Aorta (tissue), 5 donors: ENCODE measurements at regions of chr5 and their contacts with region 1.

Region 1: GRCh38 chr5:82165740-82166530 is 112.2 kb downstream of the RPS23 start:
- DNase-seq: peak; percentile 74 to 77
- ATAC-seq: peak; percentile 97
- H3K4me3 ChIP-seq: no peak overlapping the region
- H3K27ac ChIP-seq: no peak overlapping the region
- H3K4me1 ChIP-seq: no peaks in the 10 kb centered on the region
- H3K27me3 ChIP-seq: no peaks in the 10 kb centered on the region

Region 2: DNA sequence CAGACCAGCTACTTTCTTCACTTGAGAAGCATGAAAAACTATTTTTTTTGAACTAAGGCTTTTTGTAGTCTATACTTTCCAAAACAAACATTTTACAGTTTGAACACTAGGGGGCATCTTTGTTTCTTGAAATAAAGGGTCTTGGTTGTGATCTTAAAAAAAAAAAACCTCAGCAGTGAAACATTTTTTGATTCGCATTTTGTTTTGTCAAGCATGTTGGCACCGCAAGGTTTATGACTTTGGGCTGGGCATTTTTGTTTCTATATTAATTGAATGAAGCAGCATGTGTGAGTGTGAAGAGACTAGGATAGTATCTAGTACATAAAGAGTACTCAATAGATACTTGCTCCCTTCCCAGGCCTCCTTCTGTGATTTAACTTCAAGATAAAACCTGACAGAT is 740.4 kb before region 1 on chr5:
- intact Hi-C with region 1: loop called (anchors 5 kb)
- DNase-seq: no peak
- ATAC-seq: peak; percentile 69
- H3K4me3 ChIP-seq: no peak overlapping the region
- H3K27ac ChIP-seq: no peak overlapping the region
- H3K4me1 ChIP-seq: peaks cover 0 to 2% of the 10 kb centered on the region in 2 donors
- H3K27me3 ChIP-seq: no peaks in the 10 kb centered on the region

Region 3: DNA sequence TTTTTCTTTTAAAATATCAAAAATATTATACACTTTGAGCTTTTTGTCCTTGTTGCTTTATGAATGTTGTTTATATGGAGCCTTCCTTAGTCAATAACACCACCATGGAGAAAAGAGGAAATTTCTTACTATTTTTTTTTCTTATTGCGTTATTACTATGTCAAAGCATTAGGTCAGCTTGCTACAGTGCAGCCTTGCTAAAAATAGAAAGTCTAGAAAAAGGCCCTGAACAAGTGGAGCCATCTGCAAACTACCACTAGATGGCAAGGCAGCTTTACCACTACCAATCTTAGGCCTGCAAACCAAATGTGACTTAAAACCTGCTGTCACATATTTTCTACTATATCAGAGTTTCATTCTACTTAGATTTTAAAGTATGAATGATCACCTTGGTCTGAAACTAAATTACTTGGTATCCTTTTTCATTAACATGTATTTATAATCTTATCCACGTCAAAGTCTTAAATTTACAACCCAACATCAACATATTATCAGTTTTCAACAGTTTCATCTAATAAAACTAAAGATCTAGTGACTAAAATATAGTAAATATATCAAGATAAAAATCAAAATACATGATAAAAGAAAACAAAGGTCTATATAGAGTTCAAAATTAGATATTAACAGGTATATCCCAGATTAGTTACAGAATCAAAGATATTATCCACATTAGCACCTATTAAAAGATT is 658.9 kb before region 1 on chr5:
- intact Hi-C with region 1: loop called (anchors 5 kb)
- DNase-seq: peak in 1 of 2 donors; percentile 54
- ATAC-seq: peak; percentile 98
- H3K4me3 ChIP-seq: no peak overlapping the region
- H3K27ac ChIP-seq: no peak overlapping the region
- H3K4me1 ChIP-seq: no peaks in the 10 kb centered on the region
- H3K27me3 ChIP-seq: no peaks in the 10 kb centered on the region

Region 4: DNA sequence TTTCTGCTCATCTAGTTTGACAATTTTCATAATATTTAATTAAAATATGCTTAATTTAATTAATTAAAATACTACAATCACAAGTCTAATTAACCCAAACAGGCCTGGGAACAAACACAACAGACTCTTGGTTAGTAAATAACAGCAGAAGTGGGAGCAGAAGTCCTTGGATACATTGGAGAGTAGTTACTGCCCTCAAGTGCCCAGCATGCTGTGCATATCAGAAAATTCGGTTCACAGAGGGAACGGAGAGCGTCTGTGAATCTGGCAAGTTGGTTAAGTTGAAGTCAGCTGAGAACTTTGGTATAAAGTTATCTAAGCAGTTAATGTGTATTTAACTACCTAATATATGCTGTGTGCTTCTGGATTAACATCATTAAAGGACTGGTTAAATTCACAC is 281.1 kb before region 1 on chr5:
- intact Hi-C with region 1: no loop called
- DNase-seq: no peak
- ATAC-seq: no peak
- H3K4me3 ChIP-seq: no peak overlapping the region
- H3K27ac ChIP-seq: no peak overlapping the region
- H3K4me1 ChIP-seq: no peaks in the 10 kb centered on the region
- H3K27me3 ChIP-seq: no peaks in the 10 kb centered on the region

Region 5: DNA sequence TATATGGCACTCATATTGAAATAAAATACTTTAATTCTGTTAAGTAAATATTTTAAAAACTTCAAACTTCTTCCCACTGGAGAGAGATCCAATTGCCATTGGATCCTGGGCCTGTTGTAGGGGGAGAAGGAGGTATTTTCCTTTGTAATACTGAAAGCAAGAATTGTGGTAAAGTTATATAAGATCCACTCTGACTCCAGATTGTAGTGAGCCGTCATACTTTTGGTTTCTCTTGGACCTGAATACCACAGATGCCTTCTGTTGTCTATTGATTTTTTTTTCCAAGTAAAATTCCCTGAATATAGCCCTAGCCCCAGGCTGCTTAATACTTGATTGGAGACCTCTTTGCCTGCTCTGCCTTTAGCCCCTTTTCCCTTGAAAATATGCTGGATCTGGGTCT is 107.2 kb before region 1 on chr5:
- intact Hi-C with region 1: no loop called
- DNase-seq: no peak
- ATAC-seq: no peak
- H3K4me3 ChIP-seq: no peak overlapping the region
- H3K27ac ChIP-seq: no peak overlapping the region
- H3K4me1 ChIP-seq: no peaks in the 10 kb centered on the region
- H3K27me3 ChIP-seq: no peaks in the 10 kb centered on the region